AG04449 (cell line): ENCODE measurements at regions of chr1 and their contacts with region 1.

Region 1: GRCh38 chr1:26111530-26112406 is at the start of gene PDIK1L:
- DNase-seq: peak; percentile 59
- H3K4me3 ChIP-seq: peak within 1 kb of the TSS; percentile 97
- CTCF ChIP-seq: no peak

Region 2: GRCh38 chr1:25711555-25712298 is 400.0 kb before region 1 on chr1:
- CTCF ChIA-PET with region 1: no interaction called
- POLR2A ChIA-PET with region 1: no interaction called
- DNase-seq: peak; percentile 63
- H3K4me3 ChIP-seq: no peak overlapping the region
- CTCF ChIP-seq: no peak

Region 3: GRCh38 chr1:26084844-26085243 is 26.9 kb before region 1 on chr1:
- CTCF ChIA-PET with region 1: interaction called, 10 read pairs
- POLR2A ChIA-PET with region 1: no interaction called
- DNase-seq: no peak
- H3K4me3 ChIP-seq: no peak overlapping the region
- CTCF ChIP-seq: no peak

Region 4: GRCh38 chr1:26126321-26127084 is 14.7 kb after region 1 on chr1:
- CTCF ChIA-PET with region 1: interaction called, 14 read pairs
- POLR2A ChIA-PET with region 1: interaction called, 4 read pairs
- DNase-seq: no peak
- H3K4me3 ChIP-seq: no peak overlapping the region
- CTCF ChIP-seq: no peak

Region 5: DNA sequence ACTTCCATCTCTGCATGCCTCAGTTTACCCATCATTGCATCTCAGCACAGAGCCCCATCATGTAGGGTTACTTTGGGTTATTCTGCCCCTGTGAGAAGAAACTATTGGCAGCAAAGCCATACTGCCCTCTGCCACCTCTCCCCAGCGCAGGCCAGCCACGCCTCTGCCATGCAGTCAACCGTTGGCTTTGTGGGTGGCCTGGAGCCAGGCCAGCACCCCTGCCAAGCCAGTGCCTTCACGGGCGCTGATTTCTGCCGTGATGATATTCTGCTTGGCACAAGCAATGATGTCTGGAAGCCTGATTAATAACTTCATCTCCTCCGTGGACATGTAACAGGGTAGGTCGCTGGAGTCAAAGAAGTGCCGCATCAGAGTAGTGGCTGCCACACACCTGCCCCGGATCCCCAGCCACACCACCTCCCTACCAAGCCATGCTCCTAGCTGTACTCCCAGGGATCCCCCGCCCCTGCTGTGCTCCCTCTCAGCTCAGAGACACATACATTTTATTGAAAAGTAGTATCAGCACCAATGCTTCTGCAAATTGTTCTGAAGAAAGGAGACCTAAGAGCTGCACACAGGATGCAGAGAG is 107.2 kb after region 1 on chr1:
- CTCF ChIA-PET with region 1: no interaction called
- POLR2A ChIA-PET with region 1: no interaction called
- DNase-seq: no peak
- H3K4me3 ChIP-seq: no peak overlapping the region
- CTCF ChIP-seq: no peak